ENCODE measurements at regions of chr18 and their contacts with region 1.

Region 1: GRCh38 chr18:8776013-8776943 is 70.9 kb downstream of the MTCL1 start:
- DNase-seq: no peak
- ATAC-seq: no peak; the same call in 2 of the 3 replicates
- H3K4me3 ChIP-seq: no peak overlapping the region
- H3K27ac ChIP-seq: no peak overlapping the region
- H3K4me1 ChIP-seq: peaks cover 4 to 6% of the 10 kb centered on the region in 2 experiments; a peak in 2 of 5 replicates
- H3K27me3 ChIP-seq: peaks cover 0 to 8% of the 10 kb centered on the region in 2 experiments; a peak in 1 of 5 replicates
- CTCF ChIP-seq: no peak
- EP300 ChIP-seq: no peak
- POLR2A ChIP-seq: no peak
- RAD21 ChIP-seq: no peak

Region 2: DNA sequence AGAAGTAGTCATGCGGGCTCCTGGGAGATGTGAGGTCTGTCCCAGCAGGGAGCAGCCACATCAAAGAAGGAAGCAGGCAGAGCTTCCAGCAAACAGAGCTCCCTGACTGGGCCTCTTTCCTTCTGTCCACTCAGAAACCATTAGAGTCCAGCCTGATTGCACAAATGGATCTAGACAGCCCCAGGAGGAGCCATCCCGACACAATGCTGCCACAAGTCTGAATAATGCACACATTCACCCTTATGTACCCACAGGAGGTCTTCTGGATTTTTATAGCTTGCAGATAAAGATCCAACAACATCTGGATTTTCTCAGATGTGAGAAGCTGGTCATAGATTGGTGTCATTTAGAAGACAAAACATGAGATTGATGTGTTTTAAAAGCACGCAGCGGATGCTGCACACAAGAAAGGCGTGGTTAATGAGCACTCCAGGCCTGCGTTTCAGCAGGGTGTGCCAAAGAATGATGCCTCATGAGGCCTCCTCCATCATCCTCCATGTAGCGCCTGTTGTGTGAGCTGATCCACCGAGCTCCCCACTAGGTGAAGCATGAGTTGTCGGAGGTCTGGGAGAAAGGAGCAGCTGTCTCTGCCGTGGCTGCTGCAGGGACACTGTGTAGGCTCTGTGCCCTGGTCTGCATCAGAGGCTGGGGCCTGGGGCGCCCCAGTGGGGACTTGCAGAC is 10.4 kb before region 1 on chr18:
- CTCF ChIA-PET with region 1: no interaction called
- POLR2A ChIA-PET with region 1: interaction called, 15 read pairs
- in situ Hi-C with region 1: no loop called
- intact Hi-C with region 1: no loop called
- DNase-seq: no peak
- ATAC-seq: peak; percentile 57
- H3K4me3 ChIP-seq: no peak overlapping the region
- H3K27ac ChIP-seq: no peak overlapping the region
- H3K4me1 ChIP-seq: peaks cover 0 to 2% of the 10 kb centered on the region in 2 experiments; a peak in 1 of 5 replicates
- H3K27me3 ChIP-seq: no peaks in the 10 kb centered on the region; a peak in 1 of 5 replicates
- CTCF ChIP-seq: no peak
- EP300 ChIP-seq: no peak
- POLR2A ChIP-seq: no peak
- RAD21 ChIP-seq: no peak

Region 3: DNA sequence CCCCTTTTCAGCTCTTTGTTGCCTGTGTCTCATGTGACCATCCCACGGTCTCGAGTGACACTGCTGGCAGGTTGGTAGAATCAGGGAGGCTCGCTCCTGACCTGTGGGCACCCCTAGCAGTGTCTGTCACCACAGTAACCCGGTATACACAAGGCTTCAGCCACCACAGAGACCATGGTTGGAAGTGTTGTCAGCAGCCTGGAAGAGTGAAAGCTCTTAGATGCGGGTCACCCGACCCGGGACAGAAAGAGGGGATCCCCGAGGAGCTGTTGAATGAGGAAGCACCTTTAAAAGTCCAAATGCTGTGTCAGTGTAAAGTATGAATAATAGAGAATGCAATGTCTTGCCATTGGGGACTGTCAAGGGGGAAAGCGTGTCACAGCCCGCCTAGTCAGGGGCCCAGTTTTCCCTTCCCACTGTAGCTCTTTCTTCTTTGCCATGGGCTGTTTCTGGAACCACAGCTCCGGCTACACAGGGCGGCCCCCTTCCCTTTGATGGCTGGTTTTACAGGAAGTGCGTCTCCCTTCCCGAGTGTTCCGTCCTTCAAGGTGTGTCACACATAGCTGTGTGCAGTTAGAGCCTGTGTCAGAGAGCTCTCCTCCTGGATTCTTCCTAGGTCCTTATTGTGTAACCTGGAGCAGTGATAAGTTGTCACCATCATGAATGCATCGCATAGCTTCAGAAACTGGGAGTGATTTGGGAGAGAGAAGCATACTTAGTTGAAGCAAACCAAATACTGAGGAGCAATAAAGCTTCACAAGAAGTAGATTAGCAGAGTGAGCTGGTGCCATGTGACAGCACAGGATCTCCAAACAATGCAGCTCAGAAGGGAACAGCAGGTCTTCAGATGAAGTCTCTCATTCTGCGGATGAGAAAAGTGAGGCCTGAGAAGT is 10.4 kb after region 1 on chr18:
- CTCF ChIA-PET with region 1: no interaction called
- POLR2A ChIA-PET with region 1: interaction called, 20 read pairs
- in situ Hi-C with region 1: no loop called
- intact Hi-C with region 1: no loop called
- DNase-seq: no peak
- ATAC-seq: no peak
- H3K4me3 ChIP-seq: no peak overlapping the region
- H3K27ac ChIP-seq: no peak overlapping the region
- H3K4me1 ChIP-seq: peaks cover 0 to 16% of the 10 kb centered on the region in 2 experiments; a peak in 1 of 5 replicates
- H3K27me3 ChIP-seq: peaks cover 13 to 49% of the 10 kb centered on the region in 2 experiments
- CTCF ChIP-seq: no peak
- EP300 ChIP-seq: no peak
- POLR2A ChIP-seq: no peak
- RAD21 ChIP-seq: no peak

Region 4: GRCh38 chr18:8816816-8817215 is 40.5 kb after region 1 on chr18:
- CTCF ChIA-PET with region 1: no interaction called
- POLR2A ChIA-PET with region 1: no interaction called
- in situ Hi-C with region 1: no loop called
- intact Hi-C with region 1: no loop called
- DNase-seq: no peak
- ATAC-seq: no peak
- H3K4me3 ChIP-seq: no peak overlapping the region
- H3K27ac ChIP-seq: no peak overlapping the region
- H3K4me1 ChIP-seq: peaks cover 0 to 3% of the 10 kb centered on the region in 2 experiments; a peak in 2 of 5 replicates
- H3K27me3 ChIP-seq: peaks cover 7 to 10% of the 10 kb centered on the region in 2 experiments; a peak in 3 of 5 replicates
- CTCF ChIP-seq: no peak
- EP300 ChIP-seq: no peak
- POLR2A ChIP-seq: no peak
- RAD21 ChIP-seq: no peak

Region 5: GRCh38 chr18:8835521-8835953 is 59.3 kb after region 1 on chr18:
- CTCF ChIA-PET with region 1: no interaction called
- POLR2A ChIA-PET with region 1: no interaction called
- in situ Hi-C with region 1: no loop called
- intact Hi-C with region 1: no loop called
- DNase-seq: no peak
- ATAC-seq: no peak
- H3K4me3 ChIP-seq: no peak overlapping the region
- H3K27ac ChIP-seq: no peak overlapping the region
- H3K4me1 ChIP-seq: peaks cover 3 to 12% of the 10 kb centered on the region in 2 experiments; a peak in 4 of 5 replicates
- H3K27me3 ChIP-seq: peaks cover 2 to 5% of the 10 kb centered on the region in 2 experiments; a peak in 3 of 5 replicates
- CTCF ChIP-seq: no peak
- EP300 ChIP-seq: no peak
- POLR2A ChIP-seq: no peak
- RAD21 ChIP-seq: no peak

Measured in K562 (cell line).